Right ventricle myocardium inferior (tissue), 1 donor: ENCODE measurements at regions of chr6 and their contacts with region 1.

Region 1: DNA sequence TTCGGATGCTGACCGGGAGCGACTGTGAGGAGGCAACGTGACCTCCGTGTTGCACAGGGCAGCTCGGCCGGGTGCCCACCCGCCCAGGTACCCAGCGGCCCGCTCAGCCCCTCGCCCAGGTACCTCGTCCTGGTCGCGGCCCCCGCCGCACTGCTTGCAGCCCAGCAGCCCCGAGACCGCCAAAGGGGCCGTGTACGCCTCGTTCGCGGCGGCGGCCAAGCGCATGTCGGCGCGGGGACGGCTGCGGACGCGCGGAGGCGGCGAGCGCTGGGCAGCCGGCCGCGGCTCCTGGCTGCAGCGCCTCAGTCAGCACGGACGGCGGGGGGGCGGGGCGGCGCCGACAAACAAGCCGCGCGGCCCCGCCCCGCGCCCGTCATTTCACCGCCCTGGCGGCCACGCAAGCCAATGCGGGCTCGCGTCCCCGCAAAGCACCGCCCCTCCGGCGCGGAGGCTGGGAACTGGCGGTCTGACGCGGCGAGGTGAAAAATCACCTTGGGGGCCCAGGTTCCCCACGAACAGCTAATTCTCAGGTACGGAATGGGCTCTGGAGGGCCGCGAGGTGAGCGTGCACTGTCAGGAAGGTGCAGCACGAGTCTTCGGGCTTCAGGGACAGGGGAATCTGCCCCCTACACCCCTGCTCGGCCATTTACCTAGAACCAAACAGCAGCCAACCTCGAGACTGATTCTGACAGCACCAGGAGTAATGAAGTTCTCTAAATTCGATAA is 85.2 kb downstream of the SESN1 start:
- DNase-seq: peak; percentile 99
- ATAC-seq: peak; percentile 97

Region 2: GRCh38 chr6:108904741-108905140 is 104.7 kb before region 1 on chr6:
- intact Hi-C with region 1: loop called (anchors 5 kb)
- DNase-seq: no peak
- ATAC-seq: no peak

Region 3: GRCh38 chr6:108983151-108983550 is 26.2 kb before region 1 on chr6:
- intact Hi-C with region 1: no loop called
- DNase-seq: no peak
- ATAC-seq: no peak

Region 4: DNA sequence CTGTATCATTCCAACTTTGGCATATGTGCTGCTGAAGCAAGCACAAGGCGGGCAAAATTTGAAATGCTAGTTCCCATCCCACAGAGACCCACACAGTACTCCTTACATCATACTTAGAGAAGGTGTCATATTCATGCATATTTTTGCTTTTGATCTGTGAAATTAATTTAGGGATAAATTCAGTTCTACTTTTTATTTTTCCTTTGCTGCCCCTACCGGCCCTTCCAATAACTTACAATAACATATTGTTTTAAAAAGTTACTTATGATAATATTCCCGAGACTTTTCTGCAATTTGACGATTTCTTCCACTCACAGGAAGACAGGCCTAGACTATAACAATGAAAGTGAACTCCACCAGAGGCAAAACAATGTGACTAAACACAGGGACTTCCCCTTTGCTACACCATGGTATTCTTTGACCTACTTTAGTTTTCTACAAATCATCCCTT is 50.2 kb after region 1 on chr6:
- intact Hi-C with region 1: loop called (anchors 5 kb)
- DNase-seq: no peak
- ATAC-seq: no peak